Tibial artery (tissue), 4 donors: ENCODE measurements at regions of chr12 and their contacts with region 1.

Region 1: GRCh38 chr12:104456417-104456949 is at the start of gene CHST11:
- DNase-seq: peak; percentile 85 to 92
- H3K4me3 ChIP-seq: peak within 1 kb of the TSS; percentile 59 to 72
- H3K27ac ChIP-seq: peak within 1 kb of the TSS; percentile 79 to 81
- H3K4me1 ChIP-seq: peaks cover 0 to 14% (median 6%) of the 10 kb centered on the region in 4 donors
- H3K27me3 ChIP-seq: no peaks in the 10 kb centered on the region
- CTCF ChIP-seq: peak; percentile 51 to 52

Region 2: GRCh38 chr12:104121001-104121400 is 335.5 kb before region 1 on chr12:
- intact Hi-C with region 1: no loop called
- DNase-seq: no peak
- H3K4me3 ChIP-seq: no peak overlapping the region
- H3K27ac ChIP-seq: no peak overlapping the region
- H3K4me1 ChIP-seq: peaks cover 0 to 10% (median 0%) of the 10 kb centered on the region in 4 donors
- H3K27me3 ChIP-seq: no peaks in the 10 kb centered on the region
- CTCF ChIP-seq: no peak

Region 3: GRCh38 chr12:104671407-104672098 is 215.1 kb after region 1 on chr12:
- intact Hi-C with region 1: loop called (anchors 5 kb)
- DNase-seq: peak; percentile 90 to 97
- H3K4me3 ChIP-seq: no peak overlapping the region
- H3K27ac ChIP-seq: peak overlapping the region; percentile 74 to 75
- H3K4me1 ChIP-seq: peaks cover 6 to 64% (median 49%) of the 10 kb centered on the region in 4 donors
- H3K27me3 ChIP-seq: no peaks in the 10 kb centered on the region
- CTCF ChIP-seq: peak in 1 of 2 experiments; percentile 28

Region 4: DNA sequence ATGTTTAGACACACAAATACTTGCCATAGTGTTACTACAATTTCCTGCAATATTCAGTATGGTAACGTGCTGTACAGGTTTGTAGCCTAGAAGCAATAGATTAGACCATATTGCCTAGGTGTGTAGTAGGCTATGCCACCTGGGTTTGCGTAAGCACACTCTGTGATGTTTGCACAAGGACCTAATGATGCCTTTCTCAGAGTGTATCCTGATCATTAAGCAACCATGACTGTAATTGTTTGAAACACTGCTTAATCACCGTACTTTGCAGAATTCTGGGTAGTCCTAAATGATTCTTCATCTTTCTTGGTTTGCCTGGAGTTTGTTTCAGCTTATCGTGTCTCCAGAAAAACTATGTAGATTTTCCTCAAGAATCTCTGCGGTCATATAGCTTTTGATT is 1834.9 kb after region 1 on chr12:
- intact Hi-C with region 1: loop called (anchors 5 kb)
- DNase-seq: no peak
- H3K4me3 ChIP-seq: no peak overlapping the region
- H3K27ac ChIP-seq: no peak overlapping the region
- H3K4me1 ChIP-seq: peaks cover 0 to 2% (median 0%) of the 10 kb centered on the region in 4 donors
- H3K27me3 ChIP-seq: no peaks in the 10 kb centered on the region
- CTCF ChIP-seq: no peak